ENCODE measurements at regions of chr7 and their contacts with region 1.

Region 1: GRCh38 chr7:69932034-69932628 is 333.9 kb downstream of the AUTS2 start:
- DNase-seq: peak; percentile 61
- H3K4me3 ChIP-seq: no peak overlapping the region
- H3K27ac ChIP-seq: no peak overlapping the region
- H3K4me1 ChIP-seq: peaks cover 0 to 20% of the 10 kb centered on the region in 2 experiments; a peak in 2 of 4 replicates
- H3K27me3 ChIP-seq: no peaks in the 10 kb centered on the region
- CTCF ChIP-seq: peak; percentile 97
- EP300 ChIP-seq: no peak
- RAD21 ChIP-seq: peak; percentile 100

Region 2: DNA sequence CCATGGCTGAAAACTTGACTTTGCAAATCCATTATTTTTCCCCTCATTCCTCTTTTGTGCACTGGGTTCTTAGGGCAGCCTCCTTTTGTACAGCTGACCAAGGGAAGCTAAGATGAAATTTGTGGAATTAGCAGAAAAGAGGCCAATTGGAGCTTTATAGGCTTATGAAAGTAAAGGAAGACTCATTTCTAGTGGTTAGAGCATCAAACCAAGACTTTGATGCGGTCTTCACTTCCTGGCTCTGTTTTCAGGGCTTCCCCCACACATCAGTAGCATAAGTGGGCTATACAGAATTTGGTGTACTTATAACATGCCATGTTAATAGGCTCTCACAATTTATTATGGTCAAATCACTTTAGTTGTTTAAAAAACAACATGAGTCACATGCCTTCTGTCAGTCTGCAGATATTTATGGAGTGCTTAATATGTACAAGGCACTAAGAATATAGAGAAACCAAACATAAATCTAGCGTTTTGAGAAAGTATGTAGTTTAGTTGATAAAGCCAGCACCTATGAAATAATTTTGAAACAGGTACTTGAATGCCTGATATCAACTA is 328.1 kb before region 1 on chr7:
- CTCF ChIA-PET with region 1: interaction called, 13 read pairs
- POLR2A ChIA-PET with region 1: no interaction called
- DNase-seq: no peak
- H3K4me3 ChIP-seq: no peak overlapping the region
- H3K27ac ChIP-seq: no peak overlapping the region
- H3K4me1 ChIP-seq: peaks cover 8 to 18% of the 10 kb centered on the region in 2 experiments
- H3K27me3 ChIP-seq: no peaks in the 10 kb centered on the region
- CTCF ChIP-seq: no peak
- EP300 ChIP-seq: no peak
- RAD21 ChIP-seq: no peak

Region 3: DNA sequence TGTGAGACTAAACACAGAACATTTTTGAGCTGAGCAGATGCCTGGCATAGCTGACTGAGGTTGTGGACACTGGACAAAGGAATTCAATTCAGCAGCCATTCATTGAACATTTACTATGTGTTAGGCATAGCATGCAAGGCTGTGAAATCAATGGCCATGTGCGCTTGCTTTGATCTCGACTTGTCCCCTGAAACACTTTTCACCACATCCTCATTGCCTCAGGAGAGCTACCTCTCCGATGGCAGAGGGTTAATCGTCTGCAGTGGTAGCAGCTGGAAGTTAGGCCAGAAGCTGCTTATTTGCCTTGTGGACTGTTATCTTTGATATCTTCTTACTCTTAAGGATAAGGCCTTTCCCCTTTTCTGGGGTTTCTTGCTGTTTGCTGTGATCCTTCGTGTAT is 36.0 kb before region 1 on chr7:
- CTCF ChIA-PET with region 1: interaction called, 12 read pairs
- POLR2A ChIA-PET with region 1: no interaction called
- DNase-seq: no peak
- H3K4me3 ChIP-seq: no peak overlapping the region
- H3K27ac ChIP-seq: no peak overlapping the region
- H3K4me1 ChIP-seq: peaks cover 0 to 21% of the 10 kb centered on the region in 2 experiments; a peak in 2 of 4 replicates
- H3K27me3 ChIP-seq: no peaks in the 10 kb centered on the region
- CTCF ChIP-seq: no peak
- EP300 ChIP-seq: no peak
- RAD21 ChIP-seq: no peak

Region 4: GRCh38 chr7:69912846-69913245 is 19.3 kb before region 1 on chr7:
- CTCF ChIA-PET with region 1: interaction called, 31 read pairs
- POLR2A ChIA-PET with region 1: no interaction called
- DNase-seq: no peak
- H3K4me3 ChIP-seq: no peak overlapping the region
- H3K27ac ChIP-seq: no peak overlapping the region
- H3K4me1 ChIP-seq: peaks cover 4 to 8% of the 10 kb centered on the region in 2 experiments; a peak in 2 of 4 replicates
- H3K27me3 ChIP-seq: no peaks in the 10 kb centered on the region
- CTCF ChIP-seq: no peak
- EP300 ChIP-seq: no peak
- RAD21 ChIP-seq: no peak

Region 5: GRCh38 chr7:70032649-70033048 is 100.5 kb after region 1 on chr7:
- CTCF ChIA-PET with region 1: interaction called, 16 read pairs
- POLR2A ChIA-PET with region 1: no interaction called
- DNase-seq: no peak
- H3K4me3 ChIP-seq: no peak overlapping the region
- H3K27ac ChIP-seq: no peak overlapping the region
- H3K4me1 ChIP-seq: peaks cover 4 to 32% of the 10 kb centered on the region in 2 experiments; a peak in 3 of 4 replicates
- H3K27me3 ChIP-seq: no peaks in the 10 kb centered on the region
- CTCF ChIP-seq: no peak
- EP300 ChIP-seq: no peak
- RAD21 ChIP-seq: no peak

Region 6: GRCh38 chr7:70082099-70082611 is 150.0 kb after region 1 on chr7:
- CTCF ChIA-PET with region 1: no interaction called
- POLR2A ChIA-PET with region 1: no interaction called
- DNase-seq: no peak
- H3K4me3 ChIP-seq: no peak overlapping the region
- H3K27ac ChIP-seq: no peak overlapping the region
- H3K4me1 ChIP-seq: peaks cover 0 to under 1% of the 10 kb centered on the region in 2 experiments; a peak in 1 of 4 replicates
- H3K27me3 ChIP-seq: no peaks in the 10 kb centered on the region
- CTCF ChIP-seq: no peak
- EP300 ChIP-seq: no peak
- RAD21 ChIP-seq: no peak

Region 7: GRCh38 chr7:70271617-70272081 is 339.5 kb after region 1 on chr7:
- CTCF ChIA-PET with region 1: no interaction called
- POLR2A ChIA-PET with region 1: no interaction called
- DNase-seq: peak; percentile 33
- H3K4me3 ChIP-seq: no peak overlapping the region
- H3K27ac ChIP-seq: peak overlapping the region in 1 of 2 experiments; percentile 51; a peak in 3 of 4 replicates
- H3K4me1 ChIP-seq: peaks cover 0 to 32% of the 10 kb centered on the region in 2 experiments; a peak in 2 of 4 replicates
- H3K27me3 ChIP-seq: no peaks in the 10 kb centered on the region
- CTCF ChIP-seq: no peak
- EP300 ChIP-seq: peak; percentile 89 to 93; a peak in 3 of 4 replicates
- RAD21 ChIP-seq: peak; percentile 30; the same call in 1 of the 2 replicates

Measured in SK-N-SH (cell line).